CD14-positive monocyte (primary cell): ENCODE measurements at regions of chr7 and their contacts with region 1.

Region 1: DNA sequence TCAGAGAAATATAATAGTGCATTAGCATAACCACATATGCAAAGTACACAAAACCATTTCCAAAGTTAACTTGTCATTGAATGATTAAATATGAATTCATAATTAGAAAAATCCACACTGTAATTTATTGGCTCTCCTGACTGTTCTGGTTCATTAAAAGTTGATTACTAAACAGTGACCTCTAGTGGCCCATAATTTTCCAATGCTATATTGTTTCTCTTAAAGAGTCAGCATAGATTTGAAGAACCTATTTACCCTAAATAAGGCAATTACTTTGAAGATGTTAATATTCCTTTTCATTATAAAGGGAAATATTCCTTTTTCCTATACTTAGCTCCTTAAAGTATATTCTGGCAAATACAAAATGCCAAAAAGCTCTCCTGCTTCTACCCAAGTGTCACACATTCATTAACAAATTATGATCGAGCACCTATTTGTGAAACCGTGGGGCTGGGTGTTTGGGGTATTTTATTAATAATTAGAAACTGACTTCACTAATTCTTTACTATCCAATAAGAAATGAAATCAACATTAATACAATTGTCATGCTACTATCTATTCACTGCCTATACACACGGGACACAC is 86.2 kb downstream of the HIBADH start:
- DNase-seq: peak; percentile 16 to 56 (median 19)
- H3K4me3 ChIP-seq: no peak overlapping the region
- H3K4me3 Mint-ChIP-seq: no peak overlapping the region
- H3K27ac ChIP-seq: no peak overlapping the region
- H3K27ac Mint-ChIP-seq: no peak overlapping the region
- H3K4me1 ChIP-seq: peaks cover 0 to 3% of the 10 kb centered on the region in 2 donors
- H3K4me1 Mint-ChIP-seq: peaks cover 14% of the 10 kb centered on the region
- H3K27me3 ChIP-seq: no peaks in the 10 kb centered on the region
- H3K27me3 Mint-ChIP-seq: peaks cover 0 to 2% (median 1%) of the 10 kb centered on the region in 3 donors
- CTCF ChIP-seq: peak; percentile 73

Region 2: GRCh38 chr7:27204851-27205337 is 371.6 kb before region 1 on chr7:
- intact Hi-C with region 1: loop called in 1 of 2 experiments (anchors 5 kb)
- DNase-seq: peak in 1 of 3 donors; percentile 19
- H3K4me3 ChIP-seq: peak overlapping the region in 1 of 3 experiments; percentile 13
- H3K4me3 Mint-ChIP-seq: peak overlapping the region; percentile 37 to 89
- H3K27ac ChIP-seq: no peak overlapping the region
- H3K27ac Mint-ChIP-seq: no peak overlapping the region
- H3K4me1 ChIP-seq: peaks cover 34 to 37% of the 10 kb centered on the region in 2 donors
- H3K4me1 Mint-ChIP-seq: peaks cover 46% of the 10 kb centered on the region
- H3K27me3 ChIP-seq: peaks cover 93 to 99% of the 10 kb centered on the region in 2 donors
- H3K27me3 Mint-ChIP-seq: peaks cover 97 to 99% (median 98%) of the 10 kb centered on the region in 3 donors
- CTCF ChIP-seq: no peak